Activated CD8-positive, alpha-beta memory T cell treated with anti-CD3 and anti-CD28 coated beads, Interleukin-2, amount 10 ng/mL, durations not matched to agents 7 days and 5 days (primary cell): ENCODE measurements at regions of chr12 and their contacts with region 1.

Region 1: GRCh38 chr12:48142818-48143674 is 14.3 kb downstream of the ASB8 start:
- DNase-seq: no peak
- ATAC-seq: no peak
- H3K4me3 Mint-ChIP-seq: no peak overlapping the region
- H3K27ac Mint-ChIP-seq: no peak overlapping the region
- H3K4me1 Mint-ChIP-seq: no peaks in the 10 kb centered on the region
- H3K27me3 Mint-ChIP-seq: no peaks in the 10 kb centered on the region

Region 2: GRCh38 chr12:48157018-48157888 is 14.2 kb after region 1 on chr12 and contains the start of gene ASB8:
- CTCF ChIA-PET with region 1: interaction called, 11 read pairs
- DNase-seq: peak; percentile 100
- ATAC-seq: peak; percentile 98
- H3K4me3 Mint-ChIP-seq: peak within 1 kb of the TSS; percentile 95
- H3K27ac Mint-ChIP-seq: peak within 1 kb of the TSS; percentile 93
- H3K4me1 Mint-ChIP-seq: peaks cover 36% of the 10 kb centered on the region
- H3K27me3 Mint-ChIP-seq: no peaks in the 10 kb centered on the region
- total RNA-seq, gene ASB8: 40.2 to 43.1 TPM